ENCODE measurements at regions of chr20 and their contacts with region 1.

Region 1: GRCh38 chr20:8545212-8545611 is 413.1 kb downstream of the PLCB1 start:
- DNase-seq: no peak

Region 2: DNA sequence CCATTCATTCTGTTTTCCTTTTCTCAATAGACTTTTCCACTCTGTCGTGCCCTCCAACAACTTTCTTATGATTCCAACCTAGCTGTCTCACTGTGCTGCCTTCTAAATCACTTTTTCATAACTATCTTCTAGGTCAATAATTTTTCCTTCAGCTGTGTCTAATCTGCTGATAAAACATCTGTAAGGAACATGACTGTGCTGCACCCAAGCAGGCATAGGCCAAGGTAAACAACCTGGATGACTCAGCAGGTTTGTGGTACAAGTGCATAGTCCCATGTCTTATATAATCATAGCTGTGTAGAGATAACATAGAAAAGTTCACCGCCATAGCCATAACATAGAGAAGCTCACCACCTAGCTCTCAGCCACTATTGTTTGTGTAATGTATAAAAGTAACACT is 80.8 kb before region 1 on chr20:
- intact Hi-C with region 1: no loop called
- DNase-seq: no peak

Region 3: GRCh38 chr20:8646033-8646441 is 100.8 kb after region 1 on chr20:
- intact Hi-C with region 1: loop called (anchors 5 kb)
- DNase-seq: no peak